Endothelial cell of umbilical vein (primary cell): ENCODE measurements at regions of chr4 and their contacts with region 1.

Region 1: GRCh38 chr4:183950536-183950935 is 45.4 kb downstream of the STOX2 start:
- DNase-seq: no peak
- H3K4me3 ChIP-seq: no peak overlapping the region
- H3K27ac ChIP-seq: no peak overlapping the region
- H3K4me1 ChIP-seq: no peaks in the 10 kb centered on the region
- H3K27me3 ChIP-seq: no peaks in the 10 kb centered on the region
- CTCF ChIP-seq: no peak
- POLR2A ChIP-seq: no peak

Region 2: GRCh38 chr4:183618681-183619080 is 331.9 kb before region 1 on chr4:
- CTCF ChIA-PET with region 1: no interaction called
- POLR2A ChIA-PET with region 1: no interaction called
- dilution Hi-C with region 1: no loop called
- intact Hi-C with region 1: no loop called
- DNase-seq: no peak
- H3K4me3 ChIP-seq: no peak overlapping the region
- H3K27ac ChIP-seq: no peak overlapping the region
- H3K4me1 ChIP-seq: no peaks in the 10 kb centered on the region
- H3K27me3 ChIP-seq: no peaks in the 10 kb centered on the region
- CTCF ChIP-seq: no peak
- POLR2A ChIP-seq: no peak

Region 3: DNA sequence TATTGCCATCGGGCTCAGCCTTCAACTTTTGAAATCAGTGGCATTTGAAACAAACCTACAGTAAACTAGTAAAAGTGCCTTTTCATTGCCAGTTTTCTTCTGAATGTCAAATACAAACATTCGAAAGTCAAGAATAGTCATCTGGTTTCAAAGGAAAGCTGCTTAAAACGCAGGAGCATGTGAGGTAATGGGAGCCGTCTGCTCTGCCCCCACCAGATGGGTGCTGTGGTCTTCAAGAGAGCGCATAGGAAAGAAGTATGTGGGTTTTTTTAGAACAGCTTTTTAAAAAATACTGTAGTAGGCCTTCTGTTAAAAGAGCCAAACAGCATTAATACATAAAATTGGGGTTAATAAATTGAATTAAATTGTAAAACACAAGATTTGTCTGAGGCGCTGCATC is 43.1 kb after region 1 on chr4:
- CTCF ChIA-PET with region 1: no interaction called
- POLR2A ChIA-PET with region 1: interaction called, 10 read pairs
- dilution Hi-C with region 1: no loop called
- intact Hi-C with region 1: no loop called
- DNase-seq: no peak
- H3K4me3 ChIP-seq: no peak overlapping the region
- H3K27ac ChIP-seq: no peak overlapping the region
- H3K4me1 ChIP-seq: no peaks in the 10 kb centered on the region
- H3K27me3 ChIP-seq: no peaks in the 10 kb centered on the region
- CTCF ChIP-seq: no peak
- POLR2A ChIP-seq: no peak